Vagina (tissue), 2 donors: ENCODE measurements at regions of chr18 and their contacts with region 1.

Region 1: DNA sequence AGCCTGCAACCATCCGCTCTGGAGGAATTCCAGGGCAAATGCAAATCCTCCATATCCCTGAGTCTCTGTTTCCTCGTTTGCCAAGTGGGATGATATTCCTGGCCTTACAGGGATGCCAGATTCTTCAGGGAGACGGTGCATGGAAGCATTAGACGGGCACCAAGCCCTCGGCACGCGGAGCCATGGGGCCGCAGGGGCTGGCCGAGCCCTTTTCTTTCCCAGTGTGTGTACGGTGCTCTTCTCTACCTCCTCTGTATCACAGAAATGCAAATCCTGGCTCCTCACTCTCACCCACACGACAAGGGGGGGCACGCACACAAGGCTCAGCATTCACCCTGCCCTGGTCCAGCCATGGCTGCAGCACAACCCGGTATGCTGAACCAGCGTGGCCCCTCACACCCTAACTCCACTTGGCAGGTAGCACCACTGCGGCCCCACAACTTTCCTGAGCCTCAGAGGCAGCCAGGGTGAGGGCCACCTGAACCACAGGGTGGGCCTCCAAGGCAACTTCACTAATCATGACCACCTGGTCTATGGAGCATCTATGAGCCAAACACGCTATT is 64.1 kb upstream of the SALL3 start:
- DNase-seq: no peak
- H3K4me3 ChIP-seq: no peak overlapping the region
- H3K27ac ChIP-seq: no peak overlapping the region
- H3K4me1 ChIP-seq: no peaks in the 10 kb centered on the region
- H3K27me3 ChIP-seq: no peaks in the 10 kb centered on the region
- CTCF ChIP-seq: no peak
- POLR2A ChIP-seq: no peak

Region 2: DNA sequence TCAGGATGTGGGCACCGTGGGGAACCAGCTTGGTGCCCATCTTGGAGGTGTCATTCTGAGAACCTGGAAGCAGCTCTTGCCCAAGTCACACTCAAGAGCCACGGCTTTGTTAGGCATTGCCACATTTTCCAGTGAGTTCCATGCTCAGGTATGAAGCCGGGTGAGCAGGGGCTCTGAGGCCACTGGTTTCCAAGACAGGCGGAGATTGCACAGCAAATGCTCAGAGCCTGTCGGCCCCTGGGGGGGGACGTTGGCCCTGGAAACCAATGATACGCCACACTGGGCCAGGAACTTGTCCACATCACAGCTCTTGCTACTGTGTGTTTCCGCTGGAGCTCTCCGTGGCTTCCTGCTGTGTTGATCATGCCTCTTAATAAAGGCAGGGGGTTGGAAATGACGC is 11.6 kb after region 1 on chr18:
- intact Hi-C with region 1: loop called (anchors 2 kb)
- DNase-seq: no peak
- H3K4me3 ChIP-seq: no peak overlapping the region
- H3K27ac ChIP-seq: no peak overlapping the region
- H3K4me1 ChIP-seq: no peaks in the 10 kb centered on the region
- H3K27me3 ChIP-seq: no peaks in the 10 kb centered on the region
- CTCF ChIP-seq: no peak
- POLR2A ChIP-seq: no peak

Region 3: GRCh38 chr18:79030680-79031079 is 115.2 kb after region 1 on chr18:
- intact Hi-C with region 1: no loop called
- DNase-seq: no peak
- H3K4me3 ChIP-seq: no peak overlapping the region
- H3K27ac ChIP-seq: no peak overlapping the region
- H3K4me1 ChIP-seq: no peaks in the 10 kb centered on the region
- H3K27me3 ChIP-seq: no peaks in the 10 kb centered on the region
- CTCF ChIP-seq: no peak
- POLR2A ChIP-seq: no peak